AG04450 (cell line): ENCODE measurements at regions of chr4 and their contacts with region 1.

Region 1: GRCh38 chr4:151418385-151418784 is 9.4 kb downstream of the FHIP1A start:
- DNase-seq: no peak
- H3K4me3 ChIP-seq: no peak overlapping the region
- H3K27ac ChIP-seq: no peak overlapping the region
- H3K27me3 ChIP-seq: no peaks in the 10 kb centered on the region
- CTCF ChIP-seq: no peak

Region 2: GRCh38 chr4:151459375-151459774 is 41.0 kb after region 1 on chr4:
- CTCF ChIA-PET with region 1: interaction called, 15 read pairs
- POLR2A ChIA-PET with region 1: no interaction called
- DNase-seq: no peak
- H3K4me3 ChIP-seq: no peak overlapping the region
- H3K27ac ChIP-seq: no peak overlapping the region
- H3K27me3 ChIP-seq: peaks cover 18% of the 10 kb centered on the region
- CTCF ChIP-seq: no peak

Region 3: DNA sequence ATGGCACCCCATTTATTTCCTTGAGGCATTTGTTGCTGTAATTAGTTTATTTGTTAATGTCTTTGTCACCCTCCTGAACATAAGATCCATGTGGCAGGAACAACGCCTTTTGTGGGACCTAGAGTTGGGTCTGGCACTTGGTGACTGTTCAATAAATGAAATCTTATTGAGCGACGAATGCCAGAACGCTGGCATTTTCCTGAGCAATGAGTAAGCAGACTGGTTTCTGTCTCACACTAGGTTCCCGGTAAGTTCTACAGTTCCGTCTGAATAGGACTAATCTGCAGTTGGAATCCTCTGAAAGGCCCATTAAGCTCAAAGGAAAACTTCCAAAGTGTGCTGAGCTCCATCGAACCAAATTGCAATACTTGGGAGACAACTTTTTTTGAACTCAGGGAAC is 293.3 kb after region 1 on chr4:
- CTCF ChIA-PET with region 1: no interaction called
- POLR2A ChIA-PET with region 1: no interaction called
- DNase-seq: no peak
- H3K4me3 ChIP-seq: no peak overlapping the region
- H3K27ac ChIP-seq: no peak overlapping the region
- H3K27me3 ChIP-seq: no peaks in the 10 kb centered on the region
- CTCF ChIP-seq: no peak